Heart left ventricle (tissue), 16 donors: ENCODE measurements at regions of chr21 and their contacts with region 1.

Region 1: GRCh38 chr21:29298348-29299045 is at the start of gene BACH1:
- DNase-seq: peak; percentile 91 to 95 (median 93)
- ATAC-seq: peak; percentile 75 to 94 (median 91)
- H3K4me3 ChIP-seq: peak within 1 kb of the TSS; percentile 52 to 98 (median 75)
- H3K27ac ChIP-seq: peak within 1 kb of the TSS; percentile 83 to 99 (median 93)
- H3K4me1 ChIP-seq: peaks cover 4 to 55% (median 35%) of the 10 kb centered on the region in 12 donors
- H3K27me3 ChIP-seq: no peaks in the 10 kb centered on the region
- CTCF ChIP-seq: peak; percentile 23 to 72 (median 46)
- POLR2A ChIP-seq: peak in 1 of 2 donors; percentile 91
- total RNA-seq, gene BACH1: 16.7 to 83.4 (median 40.0) TPM

Region 2: DNA sequence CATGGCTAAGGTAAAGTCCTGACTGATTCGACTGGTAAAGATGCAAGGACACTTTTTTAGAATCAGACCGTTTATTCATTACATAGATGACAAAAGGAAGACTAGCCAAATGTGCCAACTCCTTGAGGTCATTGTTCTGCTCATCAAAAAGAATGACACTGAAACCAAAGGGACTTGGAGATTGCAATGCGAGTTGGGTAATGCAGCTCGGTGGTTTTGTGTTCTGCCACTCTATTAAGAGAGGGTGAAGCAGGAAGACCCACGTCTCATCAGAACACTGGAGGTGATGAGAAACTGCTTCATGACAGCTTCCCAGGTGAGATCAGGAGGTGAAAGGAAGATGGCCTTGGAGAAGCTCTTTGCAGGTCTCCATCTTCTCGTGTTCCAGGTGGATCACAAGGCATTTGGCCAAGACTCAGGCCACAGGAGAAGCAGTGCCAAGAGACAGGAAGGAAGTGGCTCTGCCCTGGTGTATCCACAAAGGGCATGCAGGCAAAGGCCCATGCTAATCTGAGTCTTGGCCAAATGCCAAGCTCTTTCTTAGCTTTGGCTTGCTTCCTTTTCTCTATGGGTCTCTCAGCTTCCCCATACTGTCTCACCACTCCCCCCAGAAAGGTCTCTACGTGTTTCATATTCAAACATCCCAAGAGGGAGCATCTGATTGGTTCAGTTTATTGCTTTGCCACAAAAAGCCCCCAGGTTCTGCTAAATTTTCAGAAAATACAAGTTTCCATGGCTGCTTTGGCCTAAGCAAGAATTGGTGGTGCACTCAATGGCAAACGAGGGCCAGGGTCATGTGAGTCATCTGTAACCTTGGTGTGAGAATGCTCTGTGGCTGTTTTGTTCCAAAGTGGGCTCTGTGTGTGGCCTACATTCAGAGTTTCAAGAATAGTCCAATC is 219.4 kb before region 1 on chr21:
- intact Hi-C with region 1: loop called in 2 of 10 experiments (anchors 5 to 10 kb)
- DNase-seq: peak in 2 of 5 donors; percentile 33 to 43
- ATAC-seq: peak in 3 of 4 donors; percentile 10 to 40 (median 25)
- H3K4me3 ChIP-seq: no peak overlapping the region
- H3K27ac ChIP-seq: peak overlapping the region in 1 of 12 donors; percentile 64
- H3K4me1 ChIP-seq: peaks cover 0 to 44% (median 5%) of the 10 kb centered on the region in 12 donors
- H3K27me3 ChIP-seq: no peaks in the 10 kb centered on the region
- CTCF ChIP-seq: no peak
- POLR2A ChIP-seq: no peak

Region 3: DNA sequence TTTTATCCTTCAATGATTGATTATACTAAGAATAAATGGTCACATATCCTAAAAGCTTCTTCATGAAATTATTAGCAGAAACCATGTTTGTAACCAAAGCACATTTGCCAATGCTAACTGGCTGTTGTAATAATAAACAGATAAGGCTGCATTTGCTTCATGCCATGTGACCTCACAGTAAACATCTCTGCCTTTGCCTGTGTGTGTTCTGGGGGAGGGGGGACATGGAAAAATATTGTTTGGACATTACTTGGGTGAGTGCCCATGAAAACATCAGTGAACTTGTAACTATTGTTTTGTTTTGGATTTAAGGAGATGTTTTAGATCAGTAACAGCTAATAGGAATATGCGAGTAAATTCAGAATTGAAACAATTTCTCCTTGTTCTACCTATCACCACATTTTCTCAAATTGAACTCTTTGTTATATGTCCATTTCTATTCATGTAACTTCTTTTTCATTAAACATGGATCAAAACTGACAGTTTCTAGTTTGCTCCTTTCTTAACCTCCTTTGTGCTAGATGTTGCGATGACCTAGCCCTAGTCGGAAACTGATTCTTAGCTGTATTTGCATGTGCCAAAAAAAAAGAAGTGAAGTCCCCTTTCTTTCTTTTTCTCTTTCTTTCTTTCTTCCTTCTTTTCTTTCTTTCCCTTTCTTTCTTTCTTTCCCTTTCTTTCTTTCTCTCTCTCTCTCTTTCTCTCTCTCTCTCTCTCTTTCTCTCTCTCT is 122.9 kb before region 1 on chr21:
- intact Hi-C with region 1: loop called in 3 of 10 experiments (anchors 10 kb)
- DNase-seq: no peak
- ATAC-seq: peak in 2 of 4 donors; percentile 47 to 57
- H3K4me3 ChIP-seq: peak overlapping the region in 1 of 12 donors; percentile 17
- H3K27ac ChIP-seq: peak overlapping the region in 7 of 12 donors; percentile 11 to 79 (median 37)
- H3K4me1 ChIP-seq: peaks cover 0 to 40% (median 12%) of the 10 kb centered on the region in 12 donors
- H3K27me3 ChIP-seq: no peaks in the 10 kb centered on the region
- CTCF ChIP-seq: no peak
- POLR2A ChIP-seq: no peak

Region 4: DNA sequence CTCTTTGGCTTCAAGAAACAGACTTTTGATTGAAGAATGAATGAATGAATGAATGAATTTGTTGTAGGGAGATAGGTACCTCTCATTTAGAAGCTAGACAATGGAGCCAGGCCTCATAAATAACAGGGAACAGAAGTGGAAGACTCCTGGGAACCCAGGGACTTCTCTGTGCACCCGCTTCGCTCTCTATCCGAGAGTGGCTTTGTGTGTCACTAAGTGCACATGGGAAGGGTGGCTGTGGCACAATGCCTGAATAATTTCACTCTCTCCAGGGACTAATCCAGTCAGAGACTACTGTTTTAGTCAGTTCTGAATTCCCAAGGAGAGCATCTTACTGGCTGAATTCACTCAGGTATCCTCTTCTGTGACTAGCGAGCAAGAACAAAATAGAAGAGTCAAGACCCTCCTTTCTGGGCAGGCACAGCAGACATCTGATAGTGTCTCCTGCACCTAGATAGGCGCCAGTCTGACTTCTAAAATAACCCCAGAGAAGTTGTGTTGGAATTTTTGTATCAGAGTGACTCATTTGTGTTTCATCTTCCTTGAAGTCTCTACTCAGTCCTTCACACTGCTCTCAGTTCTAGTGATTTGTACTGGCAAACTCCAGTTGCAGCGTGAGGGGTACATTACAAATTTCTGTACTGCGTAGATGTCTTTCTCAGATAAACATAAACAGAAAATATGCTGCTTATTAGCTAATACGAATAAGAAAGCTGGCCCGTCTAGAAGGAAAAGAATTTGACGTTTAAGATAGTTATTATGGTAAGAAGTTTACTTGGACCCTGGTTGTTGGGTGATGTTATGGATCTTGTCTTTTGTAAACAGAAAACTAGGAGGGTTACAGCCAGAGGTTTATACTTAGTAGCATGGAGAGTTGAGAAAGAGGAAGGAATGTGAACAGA is 34.2 kb after region 1 on chr21:
- intact Hi-C with region 1: loop called in 3 of 10 experiments (anchors 5 kb)
- DNase-seq: no peak
- ATAC-seq: peak; percentile 64 to 78 (median 72)
- H3K4me3 ChIP-seq: no peak overlapping the region
- H3K27ac ChIP-seq: peak overlapping the region in 3 of 12 donors; percentile 25 to 52 (median 32)
- H3K4me1 ChIP-seq: peaks cover 0 to 57% (median 9%) of the 10 kb centered on the region in 12 donors
- H3K27me3 ChIP-seq: no peaks in the 10 kb centered on the region
- CTCF ChIP-seq: no peak
- POLR2A ChIP-seq: no peak

Region 5: DNA sequence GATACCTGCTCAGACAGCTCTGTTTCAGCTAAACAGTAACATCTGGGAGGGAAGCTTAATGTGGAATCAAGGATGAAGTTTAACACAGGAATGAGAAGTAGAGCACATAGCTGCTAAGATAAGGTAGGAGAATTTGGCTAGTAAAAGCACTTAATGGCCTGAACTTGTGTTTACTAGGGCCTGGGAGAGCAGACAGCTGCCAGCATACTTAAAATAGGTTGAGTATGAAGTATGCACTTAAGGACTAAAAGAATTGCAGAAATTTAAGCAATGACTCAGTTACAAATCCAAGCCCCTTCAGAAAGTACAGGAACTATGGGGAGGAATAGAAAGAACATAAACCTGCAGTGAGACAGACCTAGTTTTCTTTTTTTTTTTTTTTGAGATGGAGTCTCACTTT is 53.2 kb after region 1 on chr21:
- intact Hi-C with region 1: loop called in 1 of 10 experiments (anchors 5 kb)
- DNase-seq: no peak
- ATAC-seq: peak in 3 of 4 donors; percentile 32 to 37 (median 34)
- H3K4me3 ChIP-seq: no peak overlapping the region
- H3K27ac ChIP-seq: peak overlapping the region in 1 of 12 donors; percentile 32
- H3K4me1 ChIP-seq: peaks cover 0 to 32% (median 6%) of the 10 kb centered on the region in 12 donors
- H3K27me3 ChIP-seq: no peaks in the 10 kb centered on the region
- CTCF ChIP-seq: no peak
- POLR2A ChIP-seq: no peak